ENCODE measurements at regions of chr12 and their contacts with region 1.

Region 1: DNA sequence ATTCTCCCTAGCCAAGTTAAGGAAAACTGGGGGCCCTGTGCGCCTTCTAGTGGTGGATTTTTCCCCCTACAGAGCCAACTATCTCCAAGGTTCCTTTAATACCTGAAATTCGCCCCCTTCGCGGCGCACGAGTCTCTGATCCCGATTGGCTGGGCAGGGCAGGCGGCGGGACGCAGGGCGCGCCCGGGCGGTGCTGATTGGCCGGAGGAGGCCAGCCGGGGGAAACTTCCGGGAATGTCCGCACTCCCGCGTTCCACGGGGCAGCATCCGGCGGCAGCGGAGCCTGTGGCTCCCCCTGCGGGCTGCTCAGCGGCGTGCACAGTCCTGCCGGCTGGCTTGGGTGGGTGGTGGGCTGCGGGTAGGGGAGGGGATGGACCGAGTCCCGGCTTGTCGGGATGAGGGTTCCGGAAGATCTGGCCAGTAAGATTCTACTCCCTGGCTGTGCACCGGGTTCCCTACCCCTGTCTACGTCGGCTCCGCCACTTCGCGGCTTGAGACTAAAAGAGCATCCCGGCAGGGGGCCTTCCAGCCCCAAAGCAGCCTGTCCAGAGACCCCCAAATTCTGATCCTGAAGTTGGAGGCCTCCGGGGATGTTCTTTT is at the start of gene NABP2:
- DNase-seq: peak; percentile 73 to 96 (median 88)
- ATAC-seq: peak; percentile 66
- H3K4me3 ChIP-seq: peak within 1 kb of the TSS; percentile 70
- H3K4me3 Mint-ChIP-seq: peak within 1 kb of the TSS; percentile 98
- H3K27ac ChIP-seq: peak within 1 kb of the TSS; percentile 60 to 81
- H3K27ac Mint-ChIP-seq: peak within 1 kb of the TSS; percentile 100
- H3K4me1 ChIP-seq: peaks cover 56% of the 10 kb centered on the region
- H3K4me1 Mint-ChIP-seq: peaks cover 48% of the 10 kb centered on the region
- H3K27me3 ChIP-seq: no peaks in the 10 kb centered on the region
- H3K27me3 Mint-ChIP-seq: no peaks in the 10 kb centered on the region
- CTCF ChIP-seq: peak; percentile 88
- total RNA-seq, gene NABP2: 7.6 to 9.1 TPM

Region 2: DNA sequence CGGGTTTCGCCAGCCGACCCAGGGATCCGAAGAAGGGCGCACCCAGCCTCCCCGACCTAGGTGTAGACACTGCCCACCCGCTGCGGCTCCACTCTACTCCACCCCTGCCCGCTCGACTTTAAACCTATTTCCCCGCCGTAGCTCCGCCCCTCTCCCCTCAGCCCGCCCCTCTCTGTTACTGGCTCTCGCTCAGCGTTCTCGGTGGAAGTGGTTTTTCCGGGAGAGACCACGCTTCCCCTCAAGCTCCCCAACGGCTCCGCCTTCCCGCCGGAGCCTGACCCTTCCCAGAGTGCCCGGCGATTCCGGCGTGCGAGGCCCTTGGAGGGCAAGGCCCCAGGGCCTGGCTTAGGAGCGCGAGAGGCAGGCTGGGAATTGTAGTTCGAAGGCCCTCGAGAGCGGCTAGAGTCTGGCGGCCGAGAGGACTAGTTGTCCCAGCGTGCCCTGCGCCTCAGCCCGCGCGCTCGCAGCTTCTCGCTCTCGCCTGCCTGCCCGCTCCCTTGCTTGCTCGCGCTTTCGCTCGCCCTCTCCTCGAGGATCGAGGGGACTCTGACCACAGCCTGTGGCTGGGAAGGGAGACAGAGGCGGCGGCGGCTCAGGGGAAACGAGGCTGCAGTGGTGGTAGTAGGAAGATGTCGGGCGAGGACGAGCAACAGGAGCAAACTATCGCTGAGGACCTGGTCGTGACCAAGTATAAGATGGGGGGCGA is 119.9 kb before region 1 on chr12 and contains the start of gene PA2G4:
- CTCF ChIA-PET with region 1: no interaction called
- POLR2A ChIA-PET with region 1: interaction called, 22 read pairs
- intact Hi-C with region 1: no loop called
- DNase-seq: peak; percentile 89 to 99 (median 96)
- ATAC-seq: peak; percentile 88
- H3K4me3 ChIP-seq: peak within 1 kb of the TSS; percentile 90
- H3K4me3 Mint-ChIP-seq: peak within 1 kb of the TSS; percentile 93
- H3K27ac ChIP-seq: peak within 1 kb of the TSS; percentile 63 to 95
- H3K27ac Mint-ChIP-seq: peak within 1 kb of the TSS; percentile 100
- H3K4me1 ChIP-seq: peaks cover 48% of the 10 kb centered on the region
- H3K4me1 Mint-ChIP-seq: peaks cover 67% of the 10 kb centered on the region
- H3K27me3 ChIP-seq: no peaks in the 10 kb centered on the region
- H3K27me3 Mint-ChIP-seq: no peaks in the 10 kb centered on the region
- CTCF ChIP-seq: no peak
- total RNA-seq, gene PA2G4: 51.0 to 61.0 TPM

Region 3: GRCh38 chr12:56152318-56153033 is 71.7 kb before region 1 on chr12 and contains the start of gene MYL6B:
- CTCF ChIA-PET with region 1: no interaction called
- POLR2A ChIA-PET with region 1: interaction called, 10 read pairs
- intact Hi-C with region 1: no loop called
- DNase-seq: peak; percentile 85 to 96 (median 91)
- ATAC-seq: peak; percentile 88
- H3K4me3 ChIP-seq: peak within 1 kb of the TSS; percentile 76
- H3K4me3 Mint-ChIP-seq: peak within 1 kb of the TSS; percentile 94
- H3K27ac ChIP-seq: peak within 1 kb of the TSS; percentile 75 to 87
- H3K27ac Mint-ChIP-seq: peak within 1 kb of the TSS; percentile 94
- H3K4me1 ChIP-seq: peaks cover 31% of the 10 kb centered on the region
- H3K4me1 Mint-ChIP-seq: peaks cover 29% of the 10 kb centered on the region
- H3K27me3 ChIP-seq: no peaks in the 10 kb centered on the region
- H3K27me3 Mint-ChIP-seq: no peaks in the 10 kb centered on the region
- CTCF ChIP-seq: no peak
- total RNA-seq, gene MYL6B: 6.2 to 6.4 TPM

Region 4: GRCh38 chr12:56206457-56207166 is 17.6 kb before region 1 on chr12:
- CTCF ChIA-PET with region 1: interaction called, 26 read pairs
- POLR2A ChIA-PET with region 1: interaction called, 10 read pairs
- intact Hi-C with region 1: no loop called
- DNase-seq: peak in 11 of 14 experiments; percentile 17 to 64 (median 25)
- ATAC-seq: peak; percentile 65
- H3K4me3 ChIP-seq: no peak overlapping the region
- H3K4me3 Mint-ChIP-seq: no peak overlapping the region
- H3K27ac ChIP-seq: no peak overlapping the region
- H3K27ac Mint-ChIP-seq: peak overlapping the region; percentile 40
- H3K4me1 ChIP-seq: no peaks in the 10 kb centered on the region
- H3K4me1 Mint-ChIP-seq: peaks cover 6% of the 10 kb centered on the region
- H3K27me3 ChIP-seq: no peaks in the 10 kb centered on the region
- H3K27me3 Mint-ChIP-seq: no peaks in the 10 kb centered on the region
- CTCF ChIP-seq: no peak

Region 5: DNA sequence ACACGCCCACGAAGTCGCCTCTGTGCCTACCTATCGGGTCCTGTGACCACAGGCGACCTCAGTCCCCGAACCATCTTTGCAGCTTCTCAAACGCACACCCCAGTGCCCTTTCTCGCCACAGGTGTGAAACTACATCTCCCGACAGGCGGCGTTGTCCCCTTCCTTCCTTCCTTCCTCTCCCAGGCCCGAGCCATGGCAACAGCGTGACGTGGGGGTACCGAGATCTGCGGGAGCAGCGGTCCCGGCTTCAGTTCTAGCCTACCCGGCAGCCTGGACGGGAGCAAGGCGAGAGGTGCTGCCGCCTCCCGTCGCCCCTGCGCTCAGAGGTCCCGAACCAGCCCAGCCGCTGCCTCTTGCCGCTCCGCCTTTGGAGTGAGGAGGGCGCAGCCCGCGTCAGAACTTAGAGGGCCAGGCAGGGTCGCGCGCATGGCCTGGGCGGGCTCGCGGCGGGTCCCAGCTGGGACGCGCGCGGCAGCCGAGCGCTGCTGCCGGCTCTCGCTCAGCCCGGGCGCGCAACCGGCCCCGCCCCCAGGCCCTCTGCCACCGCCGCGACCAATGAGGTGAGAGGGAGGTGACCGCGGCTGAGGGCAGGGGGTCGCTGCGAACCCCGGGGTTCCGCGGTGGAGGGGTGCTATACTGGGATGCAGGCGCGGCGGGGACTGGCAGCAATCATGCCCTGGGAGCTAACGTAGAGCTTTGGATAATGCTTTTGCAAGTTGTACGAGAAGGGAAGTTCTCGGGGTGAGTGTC is 42.7 kb after region 1 on chr12 and contains the start of gene COQ10A:
- CTCF ChIA-PET with region 1: interaction called, 4 read pairs
- POLR2A ChIA-PET with region 1: interaction called, 20 read pairs
- intact Hi-C with region 1: no loop called
- DNase-seq: peak; percentile 77 to 95 (median 88)
- ATAC-seq: peak; percentile 88
- H3K4me3 ChIP-seq: peak within 1 kb of the TSS; percentile 72
- H3K4me3 Mint-ChIP-seq: peak within 1 kb of the TSS; percentile 96
- H3K27ac ChIP-seq: peak within 1 kb of the TSS; percentile 91 to 96
- H3K27ac Mint-ChIP-seq: peak within 1 kb of the TSS; percentile 91
- H3K4me1 ChIP-seq: peaks cover 16% of the 10 kb centered on the region
- H3K4me1 Mint-ChIP-seq: peaks cover 17% of the 10 kb centered on the region
- H3K27me3 ChIP-seq: no peaks in the 10 kb centered on the region
- H3K27me3 Mint-ChIP-seq: no peaks in the 10 kb centered on the region
- CTCF ChIP-seq: peak; percentile 64
- total RNA-seq, gene COQ10A: 27.6 to 29.2 TPM

Measured in CD4-positive, alpha-beta T cell (primary cell).